ENCODE measurements at regions of chr20 and their contacts with region 1.

Region 1: DNA sequence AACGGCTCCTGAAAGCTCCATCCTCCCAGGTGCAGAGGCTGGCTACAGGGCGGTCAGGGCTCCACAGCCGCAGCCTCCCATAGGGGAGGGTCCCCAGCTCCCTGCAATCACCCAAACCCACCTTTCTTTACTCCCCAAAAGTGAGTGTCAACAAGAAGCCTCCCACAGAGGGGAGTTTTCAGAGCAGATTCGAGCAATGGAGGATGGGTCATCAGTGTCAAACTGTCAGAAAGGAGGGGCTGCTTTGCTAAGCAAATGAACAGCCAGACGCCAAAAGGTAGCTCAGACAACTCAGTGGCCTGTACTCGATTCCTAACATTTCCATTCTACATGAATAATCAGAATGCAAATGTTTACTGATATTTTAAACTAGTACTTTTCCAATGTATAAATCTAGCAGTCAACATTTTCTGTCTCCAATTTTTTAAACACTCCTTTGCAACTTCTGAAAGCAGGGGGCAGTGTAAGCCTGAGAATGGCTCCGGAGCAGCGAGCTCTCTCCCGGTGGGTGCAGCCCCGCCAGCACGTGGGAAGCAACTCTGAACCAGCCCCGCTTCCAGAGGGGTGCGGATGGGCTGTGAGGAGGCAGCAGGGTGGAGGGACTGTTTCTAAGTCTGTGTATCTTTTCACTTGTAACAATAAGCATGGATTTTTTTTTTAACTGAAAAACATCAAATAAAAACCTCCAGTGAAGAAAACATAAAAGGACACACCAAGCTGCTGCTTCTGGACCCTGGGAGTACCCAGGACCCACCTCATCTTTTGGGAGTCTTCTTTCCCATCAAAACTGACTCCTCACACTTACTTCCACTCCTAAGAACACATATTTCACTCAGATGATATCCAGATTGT is 54.9 kb downstream of the TAF4 start:
- DNase-seq: peak; percentile 51 to 83
- H3K4me3 ChIP-seq: no peak overlapping the region
- H3K27ac ChIP-seq: no peak overlapping the region
- H3K4me1 ChIP-seq: peaks cover 0 to 19% (median 9%) of the 10 kb centered on the region in 4 donors
- H3K27me3 ChIP-seq: no peaks in the 10 kb centered on the region
- CTCF ChIP-seq: peak in 5 of 7 experiments; percentile 34 to 69 (median 64)
- EP300 ChIP-seq: no peak
- POLR2A ChIP-seq: no peak

Region 2: DNA sequence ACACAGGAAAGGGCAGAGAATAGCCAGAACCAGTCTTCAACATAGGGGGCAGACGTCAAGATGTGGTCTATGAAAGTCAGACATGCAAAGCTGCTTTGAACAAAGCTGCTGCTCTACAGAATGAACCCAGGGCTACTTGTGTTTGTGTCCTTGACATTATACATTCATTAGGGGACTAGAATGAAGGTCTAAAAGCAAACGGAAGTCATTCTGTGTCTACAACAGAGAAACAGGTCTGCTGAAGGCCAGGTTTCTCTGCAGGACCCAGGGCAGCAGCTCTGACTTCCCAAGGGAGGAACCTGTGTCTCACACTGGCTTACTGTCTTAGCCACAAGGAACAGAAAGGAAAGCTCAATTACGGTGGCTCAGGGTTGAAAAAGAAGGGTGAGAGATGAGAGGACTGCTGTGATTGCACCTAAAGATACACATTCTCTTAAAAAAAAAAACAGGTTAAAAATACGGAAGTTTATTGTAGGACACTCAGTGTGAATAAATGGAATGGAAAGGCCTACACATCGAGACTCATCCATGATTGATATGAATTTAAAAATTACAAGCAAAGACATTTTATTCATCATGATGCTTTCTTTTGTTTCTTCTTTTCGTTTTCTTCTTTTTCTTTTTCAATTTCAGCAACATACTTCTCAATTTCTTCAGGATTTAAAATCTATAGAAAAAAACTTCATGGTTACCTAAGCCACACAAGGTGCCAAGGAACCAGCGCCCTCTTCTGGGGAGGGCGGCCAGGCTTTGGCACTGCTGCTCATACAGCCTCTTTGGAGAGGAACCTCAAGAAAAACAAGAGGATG is 125.7 kb after region 1 on chr20:
- intact Hi-C with region 1: loop called (anchors 5 kb)
- DNase-seq: peak; percentile 77 to 90
- H3K4me3 ChIP-seq: no peak overlapping the region
- H3K27ac ChIP-seq: peak overlapping the region in 2 of 5 donors; percentile 19 to 25
- H3K4me1 ChIP-seq: peaks cover 18 to 67% (median 26%) of the 10 kb centered on the region in 4 donors
- H3K27me3 ChIP-seq: no peaks in the 10 kb centered on the region
- CTCF ChIP-seq: peak in 5 of 7 experiments; percentile 25 to 80 (median 66)
- EP300 ChIP-seq: no peak
- POLR2A ChIP-seq: no peak

Region 3: GRCh38 chr20:63452821-63453523 is 1442.2 kb after region 1 on chr20:
- intact Hi-C with region 1: no loop called
- DNase-seq: peak in 1 of 2 donors; percentile 47
- H3K4me3 ChIP-seq: no peak overlapping the region
- H3K27ac ChIP-seq: no peak overlapping the region
- H3K4me1 ChIP-seq: peaks cover 5 to 29% (median 18%) of the 10 kb centered on the region in 4 donors
- H3K27me3 ChIP-seq: peaks cover 6 to 100% (median 65%) of the 10 kb centered on the region in 3 donors
- CTCF ChIP-seq: no peak
- EP300 ChIP-seq: no peak
- POLR2A ChIP-seq: no peak